Dorsolateral prefrontal cortex (tissue), 120 donors: ENCODE measurements at regions of chr5 and their contacts with region 1.

Region 1: GRCh38 chr5:59666440-59667068 is 227.0 kb downstream of the PDE4D start:
- DNase-seq: no peak
- H3K4me3 ChIP-seq: no peak overlapping the region
- H3K27ac ChIP-seq: no peak overlapping the region
- H3K27me3 ChIP-seq: no peaks in the 10 kb centered on the region
- CTCF ChIP-seq: peak in 24 of 56 donors; percentile 6 to 32 (median 18)

Region 2: DNA sequence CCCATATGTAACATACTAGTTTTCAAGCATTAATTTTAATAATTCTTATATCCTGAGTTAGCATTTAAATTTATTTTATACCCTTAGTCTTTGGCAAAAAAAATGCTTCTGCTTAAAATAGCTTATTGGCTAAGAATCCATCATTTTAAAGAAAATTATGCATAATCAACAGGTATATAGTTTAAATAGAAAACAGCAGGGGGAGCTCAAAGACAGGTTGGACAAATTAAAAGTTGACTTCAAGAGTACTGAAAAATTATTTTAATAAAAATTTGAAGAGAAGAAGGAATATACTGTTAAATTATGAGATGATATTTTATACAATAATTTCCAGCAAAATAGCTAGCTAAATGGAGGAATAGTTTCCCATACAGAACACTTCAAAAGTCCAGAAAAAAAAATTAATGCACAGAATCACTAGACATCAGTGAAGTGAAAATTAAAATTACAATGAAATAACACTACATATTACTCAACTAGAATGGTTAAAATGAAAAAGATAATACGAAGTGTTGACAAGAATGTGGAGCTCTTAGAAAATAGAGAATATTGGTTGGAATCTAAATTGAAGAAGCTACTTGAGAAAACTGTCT is 160.2 kb before region 1 on chr5:
- intact Hi-C with region 1: loop called in 1 of 2 experiments (anchors 5 kb)
- DNase-seq: no peak
- H3K4me3 ChIP-seq: no peak overlapping the region
- H3K27ac ChIP-seq: no peak overlapping the region
- H3K27me3 ChIP-seq: no peaks in the 10 kb centered on the region
- CTCF ChIP-seq: peak; percentile 39 to 83 (median 63)